ENCODE measurements at regions of chr15 and their contacts with region 1.

Region 1: DNA sequence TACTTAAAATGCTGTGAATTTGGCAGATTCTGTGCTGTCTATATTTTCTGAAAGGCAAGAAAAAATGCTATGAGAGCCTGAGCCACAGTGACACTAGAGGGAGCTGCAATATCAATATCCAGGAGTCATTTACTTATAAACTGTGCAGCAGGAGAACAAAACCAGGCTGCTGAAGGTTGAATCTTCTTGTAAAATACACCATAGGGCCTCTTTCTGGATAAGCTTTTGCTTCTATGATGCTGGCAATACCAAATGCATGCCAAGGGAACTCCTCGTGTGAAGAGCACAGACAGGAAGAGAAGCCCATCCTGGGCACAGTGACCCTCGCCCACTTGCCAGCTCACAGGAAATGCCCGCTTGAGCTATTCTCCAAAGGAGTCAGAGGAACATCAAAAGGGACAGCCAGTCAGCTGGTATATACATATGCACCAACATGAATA is 48.0 kb upstream of the TSPAN3 start:
- DNase-seq: peak; percentile 80
- H3K4me3 ChIP-seq: no peak overlapping the region
- H3K27ac ChIP-seq: peak overlapping the region; percentile 8
- H3K4me1 ChIP-seq: peaks cover 14% of the 10 kb centered on the region
- H3K27me3 ChIP-seq: no peaks in the 10 kb centered on the region
- CTCF ChIP-seq: peak; percentile 57 to 63
- POLR2A ChIP-seq: no peak

Region 2: GRCh38 chr15:77107531-77108355 is 11.2 kb before region 1 on chr15:
- CTCF ChIA-PET with region 1: interaction called, 22 read pairs
- POLR2A ChIA-PET with region 1: no interaction called
- dilution Hi-C with region 1: no loop called
- intact Hi-C with region 1: no loop called
- DNase-seq: peak; percentile 53
- H3K4me3 ChIP-seq: no peak overlapping the region
- H3K27ac ChIP-seq: no peak overlapping the region
- H3K4me1 ChIP-seq: peaks cover 3% of the 10 kb centered on the region
- H3K27me3 ChIP-seq: no peaks in the 10 kb centered on the region
- CTCF ChIP-seq: peak; percentile 61 to 78
- POLR2A ChIP-seq: no peak

Region 3: DNA sequence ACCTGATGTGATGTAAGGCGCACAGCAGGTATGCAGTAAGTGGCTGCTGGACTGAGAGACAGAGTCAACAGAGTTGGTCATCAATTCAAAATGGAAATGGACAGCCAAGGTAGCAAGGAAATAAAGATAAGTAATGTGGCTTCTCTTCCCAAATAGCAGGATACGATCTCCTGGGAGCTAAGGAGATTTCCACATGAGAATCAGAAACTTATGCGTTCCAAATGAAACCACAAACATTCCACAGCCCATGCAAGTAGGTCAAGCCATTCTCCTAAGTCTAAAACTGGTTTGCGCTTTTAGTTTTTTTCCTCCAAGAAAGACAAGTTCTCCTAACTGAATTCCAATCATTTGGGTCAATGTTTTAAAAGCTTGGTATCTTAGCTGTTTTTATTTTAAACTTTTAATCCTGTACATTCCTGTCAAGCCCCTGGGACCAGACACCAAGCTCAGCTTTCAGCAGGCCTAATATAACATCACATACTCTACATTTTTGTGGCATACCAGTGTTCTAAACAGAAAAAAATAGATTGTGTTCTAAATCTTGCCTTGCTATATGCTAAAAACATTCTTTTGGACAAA is 25.7 kb after region 1 on chr15:
- CTCF ChIA-PET with region 1: interaction called, 16 read pairs
- POLR2A ChIA-PET with region 1: no interaction called
- dilution Hi-C with region 1: no loop called
- intact Hi-C with region 1: no loop called
- DNase-seq: no peak
- H3K4me3 ChIP-seq: no peak overlapping the region
- H3K27ac ChIP-seq: peak overlapping the region; percentile 45
- H3K4me1 ChIP-seq: peaks cover 19% of the 10 kb centered on the region
- H3K27me3 ChIP-seq: no peaks in the 10 kb centered on the region
- CTCF ChIP-seq: no peak
- POLR2A ChIP-seq: no peak

Region 4: GRCh38 chr15:77186594-77187011 is 67.7 kb after region 1 on chr15:
- CTCF ChIA-PET with region 1: interaction called, 16 read pairs
- POLR2A ChIA-PET with region 1: no interaction called
- dilution Hi-C with region 1: no loop called
- intact Hi-C with region 1: loop called (anchors 1 kb)
- DNase-seq: peak; percentile 66
- H3K4me3 ChIP-seq: no peak overlapping the region
- H3K27ac ChIP-seq: peak overlapping the region; percentile 92
- H3K4me1 ChIP-seq: peaks cover 33% of the 10 kb centered on the region
- H3K27me3 ChIP-seq: no peaks in the 10 kb centered on the region
- CTCF ChIP-seq: peak; percentile 30 to 56
- POLR2A ChIP-seq: no peak

Region 5: DNA sequence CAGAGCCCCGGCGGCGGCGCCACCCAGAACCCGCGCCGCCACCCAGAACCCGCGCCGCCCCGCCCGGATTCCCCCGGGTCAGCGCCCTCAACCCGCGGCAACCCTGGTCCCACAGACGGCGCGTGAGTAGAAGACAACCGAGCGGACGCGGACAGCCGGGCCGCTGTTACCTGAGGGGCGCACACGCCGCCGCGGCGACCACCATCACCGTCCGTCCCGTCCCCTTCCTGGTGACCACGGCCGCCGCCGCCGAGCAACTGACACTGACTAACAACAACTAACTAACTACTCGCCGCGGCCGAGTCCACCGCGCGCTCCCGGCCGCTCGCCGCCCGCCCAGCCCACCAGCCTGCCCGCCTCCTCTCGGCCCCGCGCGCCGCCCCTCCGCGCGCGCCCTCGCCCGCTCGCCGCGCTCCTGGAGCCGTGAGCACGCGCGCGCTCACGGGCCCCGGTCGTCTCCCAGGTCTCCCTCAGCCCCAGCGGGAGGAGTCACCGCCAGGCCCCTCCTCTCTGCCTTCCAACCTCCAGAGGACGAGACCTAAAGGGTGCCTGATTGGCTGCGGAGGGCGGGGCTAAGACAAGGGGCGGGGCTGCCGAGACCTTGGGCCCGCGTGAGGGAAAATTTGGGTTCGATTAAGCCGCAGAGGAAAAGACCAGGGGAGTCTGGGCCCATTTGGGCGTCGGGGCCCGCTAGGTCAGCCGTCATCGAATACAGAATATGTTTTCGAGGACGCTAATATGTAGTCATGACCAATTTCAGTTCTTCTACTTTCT is 301.1 kb after region 1 on chr15 and contains the start of gene PEAK1:
- CTCF ChIA-PET with region 1: interaction called, 8 read pairs
- POLR2A ChIA-PET with region 1: no interaction called
- dilution Hi-C with region 1: no loop called
- intact Hi-C with region 1: loop called (anchors 1 kb)
- DNase-seq: peak; percentile 98
- H3K4me3 ChIP-seq: peak within 1 kb of the TSS; percentile 79 to 99 (median 95)
- H3K27ac ChIP-seq: peak within 1 kb of the TSS; percentile 95
- H3K4me1 ChIP-seq: peaks cover 43% of the 10 kb centered on the region
- H3K27me3 ChIP-seq: no peaks in the 10 kb centered on the region
- CTCF ChIP-seq: no peak
- POLR2A ChIP-seq: peak; percentile 84
- total RNA-seq, gene PEAK1: 79.2 and 91.9 TPM in 2 replicates

Measured in endothelial cell of umbilical vein (primary cell).